ENCODE measurements at regions of chr15 and their contacts with region 1.

Region 1: DNA sequence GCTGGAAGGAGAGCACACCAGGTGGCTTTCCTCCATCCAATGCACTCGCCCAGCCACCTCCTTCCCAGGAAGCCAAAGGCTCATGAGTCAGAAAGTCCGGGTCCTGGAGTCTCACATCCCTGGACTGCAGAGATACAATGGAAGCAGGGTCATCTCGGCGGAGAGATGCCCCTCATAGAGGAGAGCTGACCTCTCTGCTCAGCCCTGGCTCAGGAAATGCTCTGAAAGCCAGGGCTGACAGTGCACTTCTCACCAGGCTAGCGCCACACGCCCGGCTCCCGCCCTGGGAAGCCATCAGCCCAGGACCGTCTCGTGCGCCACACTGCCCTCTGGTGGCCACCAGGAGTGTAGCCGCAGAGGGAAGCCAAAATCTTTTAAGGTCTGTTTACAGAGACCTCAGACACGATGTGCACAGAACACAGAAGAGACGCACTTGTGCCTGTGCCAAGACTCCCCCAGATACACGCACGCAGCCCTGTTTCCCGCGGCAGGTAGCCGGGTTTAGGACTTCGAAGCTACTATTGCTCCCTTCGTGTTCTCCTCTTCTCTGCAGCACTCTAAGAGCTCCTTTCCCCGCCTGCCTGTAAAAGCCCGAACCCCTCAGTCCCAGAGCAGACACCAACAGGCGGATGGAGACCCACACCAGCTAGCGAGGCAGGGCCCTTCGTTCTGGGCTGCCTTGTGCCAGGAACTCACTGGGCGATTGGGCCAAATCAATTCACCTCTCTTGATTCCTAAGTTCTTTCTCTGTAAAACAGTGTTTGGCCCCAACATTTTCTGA is 9.7 kb downstream of the NTRK3 start:
- DNase-seq: peak; percentile 68
- H3K4me3 ChIP-seq: no peak overlapping the region
- H3K27ac ChIP-seq: no peak overlapping the region
- H3K4me1 ChIP-seq: peaks cover 3% of the 10 kb centered on the region
- H3K27me3 ChIP-seq: no peaks in the 10 kb centered on the region
- CTCF ChIP-seq: peak; percentile 89 to 96 (median 95)
- POLR2A ChIP-seq: no peak

Region 2: GRCh38 chr15:86915811-86916331 is 1331.0 kb before region 1 on chr15:
- intact Hi-C with region 1: loop called (anchors 10 kb)
- DNase-seq: peak; percentile 33
- H3K4me3 ChIP-seq: no peak overlapping the region
- H3K27ac ChIP-seq: no peak overlapping the region
- H3K4me1 ChIP-seq: no peaks in the 10 kb centered on the region
- H3K27me3 ChIP-seq: no peaks in the 10 kb centered on the region
- CTCF ChIP-seq: peak in 3 of 4 experiments; percentile 42 to 66 (median 44)
- POLR2A ChIP-seq: no peak

Region 3: DNA sequence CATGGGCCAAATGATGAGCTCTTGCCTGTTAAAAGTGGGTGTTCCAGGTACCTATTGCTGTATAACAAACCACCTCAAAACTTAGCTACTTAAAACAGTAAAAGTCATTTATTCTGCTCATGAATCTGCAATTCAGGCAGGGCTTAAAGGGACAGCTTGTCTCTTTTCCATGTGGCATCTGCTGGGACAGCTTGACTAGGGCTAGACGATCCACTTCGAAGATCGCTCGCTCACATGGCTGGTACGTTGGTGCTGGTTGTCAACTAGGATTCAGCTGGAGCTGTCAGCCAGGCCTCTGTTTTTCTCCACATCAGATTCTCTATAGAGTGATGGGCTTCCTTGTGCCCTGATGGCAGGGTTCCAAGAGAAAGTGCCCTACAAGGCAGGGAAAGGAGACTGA is 571.6 kb before region 1 on chr15:
- intact Hi-C with region 1: loop called (anchors 2 kb)
- DNase-seq: no peak
- H3K4me3 ChIP-seq: no peak overlapping the region
- H3K27ac ChIP-seq: no peak overlapping the region
- H3K4me1 ChIP-seq: no peaks in the 10 kb centered on the region
- H3K27me3 ChIP-seq: no peaks in the 10 kb centered on the region
- CTCF ChIP-seq: no peak
- POLR2A ChIP-seq: no peak

Region 4: GRCh38 chr15:87764461-87765240 is 482.2 kb before region 1 on chr15:
- intact Hi-C with region 1: no loop called
- DNase-seq: no peak
- H3K4me3 ChIP-seq: no peak overlapping the region
- H3K27ac ChIP-seq: no peak overlapping the region
- H3K4me1 ChIP-seq: no peaks in the 10 kb centered on the region
- H3K27me3 ChIP-seq: no peaks in the 10 kb centered on the region
- CTCF ChIP-seq: no peak
- POLR2A ChIP-seq: no peak

Region 5: DNA sequence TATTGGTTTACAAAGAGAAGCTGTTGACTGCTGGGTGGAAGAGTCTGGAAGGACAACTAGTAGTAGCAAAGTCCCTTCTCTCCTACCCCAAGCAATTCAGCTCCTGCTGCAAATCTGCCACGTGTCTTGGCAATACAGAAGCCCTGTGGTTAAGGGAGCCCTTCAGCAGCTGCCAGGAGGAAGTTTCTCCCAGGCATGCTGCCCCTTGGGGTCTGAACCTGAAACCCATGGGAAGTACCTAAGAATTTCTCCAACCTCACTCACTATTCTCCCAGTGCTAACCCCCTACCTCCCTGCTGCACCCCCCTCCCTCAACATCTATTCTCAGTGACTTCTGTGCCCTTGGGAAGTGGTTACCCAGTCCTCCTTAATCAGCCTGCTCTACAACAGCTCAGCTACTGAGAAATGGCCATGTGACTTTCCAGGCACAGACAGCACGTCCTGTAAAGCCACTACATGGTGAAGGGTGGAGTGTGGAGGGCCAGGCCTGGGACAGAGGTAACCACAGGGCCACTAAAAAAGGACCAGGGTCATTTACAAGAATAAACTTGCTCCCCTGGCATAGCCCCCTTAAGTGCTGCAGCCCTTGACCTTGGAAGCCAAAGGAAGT is 306.9 kb before region 1 on chr15:
- intact Hi-C with region 1: loop called (anchors 10 kb)
- DNase-seq: no peak
- H3K4me3 ChIP-seq: no peak overlapping the region
- H3K27ac ChIP-seq: no peak overlapping the region
- H3K4me1 ChIP-seq: no peaks in the 10 kb centered on the region
- H3K27me3 ChIP-seq: no peaks in the 10 kb centered on the region
- CTCF ChIP-seq: no peak
- POLR2A ChIP-seq: no peak

Region 6: GRCh38 chr15:88450109-88450798 is 203.4 kb after region 1 on chr15:
- intact Hi-C with region 1: no loop called
- DNase-seq: peak; percentile 27
- H3K4me3 ChIP-seq: no peak overlapping the region
- H3K27ac ChIP-seq: no peak overlapping the region
- H3K4me1 ChIP-seq: no peaks in the 10 kb centered on the region
- H3K27me3 ChIP-seq: no peaks in the 10 kb centered on the region
- CTCF ChIP-seq: peak in 3 of 4 experiments; percentile 46 to 67 (median 63)
- POLR2A ChIP-seq: no peak

Measured in prostate gland (tissue), 2 donors.